CD14-positive monocyte (primary cell): ENCODE measurements at regions of chr11 and their contacts with region 1.

Region 1: GRCh38 chr11:14892036-14892567 is at the start of gene CYP2R1:
- DNase-seq: peak; percentile 92 to 94 (median 94)
- H3K4me3 ChIP-seq: peak within 1 kb of the TSS; percentile 53 to 96 (median 85)
- H3K4me3 Mint-ChIP-seq: peak within 1 kb of the TSS; percentile 89 to 98
- H3K27ac ChIP-seq: peak within 1 kb of the TSS; percentile 86 to 88
- H3K27ac Mint-ChIP-seq: peak within 1 kb of the TSS; percentile 87 to 95 (median 93)
- H3K4me1 ChIP-seq: peaks cover 33 to 45% of the 10 kb centered on the region in 2 donors
- H3K4me1 Mint-ChIP-seq: peaks cover 45% of the 10 kb centered on the region
- H3K27me3 ChIP-seq: no peaks in the 10 kb centered on the region
- H3K27me3 Mint-ChIP-seq: peaks cover 0 to 2% (median 0%) of the 10 kb centered on the region in 3 donors
- CTCF ChIP-seq: no peak
- polyA plus RNA-seq, gene CYP2R1: 5.4 to 8.3 (median 7.0) TPM

Region 2: DNA sequence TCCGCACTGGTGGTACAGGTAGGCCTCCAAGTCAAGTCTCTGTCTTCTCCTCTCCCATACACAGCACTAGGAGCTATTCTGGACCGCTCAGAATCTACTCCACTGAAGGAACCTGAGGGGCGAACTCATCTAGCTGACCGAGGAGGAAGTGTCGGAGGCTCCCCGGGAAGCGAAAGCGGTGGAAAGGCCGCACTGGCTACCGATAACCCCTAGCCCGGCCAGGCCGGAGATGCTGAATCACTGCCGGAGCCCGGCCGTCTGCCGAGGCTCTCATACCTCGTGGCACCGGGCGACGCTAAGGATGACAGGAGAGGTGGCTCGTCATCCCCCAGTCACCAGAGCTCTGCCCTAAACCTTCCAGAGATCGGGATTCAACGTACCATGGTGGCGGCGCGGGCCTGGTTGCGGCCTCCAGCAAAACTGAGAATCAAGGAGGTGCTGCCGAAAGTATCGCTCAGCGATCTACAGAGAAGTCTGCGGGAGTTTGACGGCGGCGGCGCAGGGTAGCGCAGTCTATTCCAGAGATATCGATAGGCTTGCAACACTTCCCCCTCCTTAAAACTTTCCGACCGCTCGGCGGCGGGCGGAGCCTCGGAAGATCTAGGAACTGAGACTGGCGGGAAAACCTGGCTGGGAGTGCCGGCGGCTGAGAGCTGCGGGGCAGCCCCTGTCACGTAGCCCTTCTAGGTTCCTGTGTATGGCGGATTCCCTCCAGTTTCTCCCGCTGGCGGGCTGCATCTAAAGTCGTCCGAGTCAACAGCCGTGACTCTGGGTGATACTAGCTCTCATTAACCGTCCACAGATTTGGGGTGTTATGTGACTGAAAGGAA is 372.0 kb before region 1 on chr11 and contains the start of gene PSMA1:
- intact Hi-C with region 1: loop called (anchors 5 to 10 kb)
- DNase-seq: peak; percentile 88 to 94 (median 92)
- H3K4me3 ChIP-seq: peak within 1 kb of the TSS; percentile 67 to 93 (median 80)
- H3K4me3 Mint-ChIP-seq: peak within 1 kb of the TSS; percentile 90 to 97
- H3K27ac ChIP-seq: peak within 1 kb of the TSS; percentile 95
- H3K27ac Mint-ChIP-seq: peak within 1 kb of the TSS; percentile 97 to 99 (median 99)
- H3K4me1 ChIP-seq: peaks cover 17% of the 10 kb centered on the region in 2 donors
- H3K4me1 Mint-ChIP-seq: peaks cover 18% of the 10 kb centered on the region
- H3K27me3 ChIP-seq: no peaks in the 10 kb centered on the region
- H3K27me3 Mint-ChIP-seq: peaks cover 0 to 1% (median 0%) of the 10 kb centered on the region in 3 donors
- CTCF ChIP-seq: peak; percentile 35
- polyA plus RNA-seq, gene PSMA1: 163 to 228 (median 201) TPM

Region 3: GRCh38 chr11:14544611-14545010 is 347.5 kb before region 1 on chr11:
- intact Hi-C with region 1: loop called in 1 of 2 experiments (anchors 5 kb)
- DNase-seq: peak; percentile 73 to 95 (median 93)
- H3K4me3 ChIP-seq: peak overlapping the region in 1 of 3 experiments; percentile 21
- H3K4me3 Mint-ChIP-seq: no peak overlapping the region
- H3K27ac ChIP-seq: peak overlapping the region in 1 of 2 donors; percentile 92
- H3K27ac Mint-ChIP-seq: peak overlapping the region; percentile 82 to 94 (median 90)
- H3K4me1 ChIP-seq: peaks cover 53 to 62% of the 10 kb centered on the region in 2 donors
- H3K4me1 Mint-ChIP-seq: peaks cover 55% of the 10 kb centered on the region
- H3K27me3 ChIP-seq: no peaks in the 10 kb centered on the region
- H3K27me3 Mint-ChIP-seq: no peaks in the 10 kb centered on the region
- CTCF ChIP-seq: no peak

Region 4: GRCh38 chr11:14619603-14620531 is 272.2 kb before region 1 on chr11:
- intact Hi-C with region 1: loop called in 1 of 2 experiments (anchors 10 kb)
- DNase-seq: no peak
- H3K4me3 ChIP-seq: no peak overlapping the region
- H3K4me3 Mint-ChIP-seq: no peak overlapping the region
- H3K27ac ChIP-seq: no peak overlapping the region
- H3K27ac Mint-ChIP-seq: no peak overlapping the region
- H3K4me1 ChIP-seq: peaks cover 20 to 31% of the 10 kb centered on the region in 2 donors
- H3K4me1 Mint-ChIP-seq: peaks cover 36% of the 10 kb centered on the region
- H3K27me3 ChIP-seq: no peaks in the 10 kb centered on the region
- H3K27me3 Mint-ChIP-seq: no peaks in the 10 kb centered on the region
- CTCF ChIP-seq: no peak

Region 5: GRCh38 chr11:14784230-14784629 is 107.9 kb before region 1 on chr11:
- intact Hi-C with region 1: no loop called
- DNase-seq: no peak
- H3K4me3 ChIP-seq: no peak overlapping the region
- H3K4me3 Mint-ChIP-seq: no peak overlapping the region
- H3K27ac ChIP-seq: no peak overlapping the region
- H3K27ac Mint-ChIP-seq: peak overlapping the region in 1 of 7 donors; percentile 7
- H3K4me1 ChIP-seq: peaks cover 3 to 5% of the 10 kb centered on the region in 2 donors
- H3K4me1 Mint-ChIP-seq: peaks cover 10% of the 10 kb centered on the region
- H3K27me3 ChIP-seq: no peaks in the 10 kb centered on the region
- H3K27me3 Mint-ChIP-seq: no peaks in the 10 kb centered on the region
- CTCF ChIP-seq: no peak